GM10248 (cell line): ENCODE measurements at regions of chr20 and their contacts with region 1.

Region 1: GRCh38 chr20:21615617-21616080 is 89.8 kb upstream of the PAX1 start:
- DNase-seq: peak; percentile 66
- CTCF ChIP-seq: peak; percentile 75

Region 2: GRCh38 chr20:21529863-21530262 is 85.8 kb before region 1 on chr20:
- CTCF ChIA-PET with region 1: interaction called, 12 read pairs
- POLR2A ChIA-PET with region 1: no interaction called
- DNase-seq: peak; percentile 36
- CTCF ChIP-seq: no peak

Region 3: DNA sequence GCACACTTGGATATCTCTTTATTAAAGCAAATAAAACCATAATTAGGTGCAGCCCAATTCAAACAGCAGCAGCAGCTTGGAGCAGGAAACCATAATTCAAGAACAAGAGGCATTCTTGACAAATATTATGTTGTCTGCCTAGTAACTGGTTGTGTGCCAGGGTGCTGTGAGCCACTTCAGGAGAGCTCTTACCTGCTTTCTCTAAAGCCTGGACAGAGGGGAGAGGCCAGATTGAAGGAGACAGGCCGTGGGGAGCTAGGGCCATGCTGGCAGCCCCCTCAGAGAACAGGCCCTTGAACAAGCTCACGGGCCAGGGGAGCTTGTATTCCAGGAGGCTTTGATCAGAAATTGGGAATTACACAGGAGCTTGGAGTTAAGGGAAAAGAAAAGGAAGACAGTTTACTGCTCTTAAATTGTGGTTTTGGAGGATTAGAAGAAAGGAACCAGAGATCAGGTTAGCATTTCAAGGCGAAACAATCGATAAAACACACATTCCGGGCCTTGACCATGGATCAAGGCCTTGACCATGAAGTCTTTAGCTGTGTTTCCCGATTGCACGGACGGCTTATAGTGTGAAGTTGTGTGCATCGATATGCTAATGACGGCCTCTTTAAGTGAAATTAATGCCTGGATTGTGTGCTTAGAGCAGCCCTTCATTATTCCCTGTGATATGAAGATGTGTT is 32.0 kb before region 1 on chr20:
- CTCF ChIA-PET with region 1: interaction called, 16 read pairs
- POLR2A ChIA-PET with region 1: no interaction called
- DNase-seq: no peak
- CTCF ChIP-seq: no peak

Region 4: DNA sequence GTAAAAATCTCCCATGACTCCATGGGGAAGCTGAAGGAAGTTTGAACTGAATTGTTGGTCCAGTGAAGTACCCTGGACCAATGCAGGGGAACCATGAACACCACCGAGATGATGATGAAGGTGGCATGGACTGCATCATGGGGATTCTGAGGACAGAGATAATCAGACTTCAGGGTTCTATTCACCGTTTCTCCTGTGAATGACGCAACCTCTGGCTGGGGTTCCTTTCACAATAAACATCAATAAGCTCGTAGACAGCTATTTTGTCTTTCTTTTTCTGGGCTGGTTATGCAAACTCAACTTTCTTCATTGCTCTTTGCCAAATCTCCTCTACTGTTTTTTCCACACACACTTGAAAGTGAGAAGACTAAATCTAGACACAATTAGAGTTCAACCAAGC is 13.8 kb before region 1 on chr20:
- CTCF ChIA-PET with region 1: interaction called, 27 read pairs
- POLR2A ChIA-PET with region 1: no interaction called
- DNase-seq: no peak
- CTCF ChIP-seq: no peak